ENCODE measurements at regions of chr13 and their contacts with region 1.

Region 1: DNA sequence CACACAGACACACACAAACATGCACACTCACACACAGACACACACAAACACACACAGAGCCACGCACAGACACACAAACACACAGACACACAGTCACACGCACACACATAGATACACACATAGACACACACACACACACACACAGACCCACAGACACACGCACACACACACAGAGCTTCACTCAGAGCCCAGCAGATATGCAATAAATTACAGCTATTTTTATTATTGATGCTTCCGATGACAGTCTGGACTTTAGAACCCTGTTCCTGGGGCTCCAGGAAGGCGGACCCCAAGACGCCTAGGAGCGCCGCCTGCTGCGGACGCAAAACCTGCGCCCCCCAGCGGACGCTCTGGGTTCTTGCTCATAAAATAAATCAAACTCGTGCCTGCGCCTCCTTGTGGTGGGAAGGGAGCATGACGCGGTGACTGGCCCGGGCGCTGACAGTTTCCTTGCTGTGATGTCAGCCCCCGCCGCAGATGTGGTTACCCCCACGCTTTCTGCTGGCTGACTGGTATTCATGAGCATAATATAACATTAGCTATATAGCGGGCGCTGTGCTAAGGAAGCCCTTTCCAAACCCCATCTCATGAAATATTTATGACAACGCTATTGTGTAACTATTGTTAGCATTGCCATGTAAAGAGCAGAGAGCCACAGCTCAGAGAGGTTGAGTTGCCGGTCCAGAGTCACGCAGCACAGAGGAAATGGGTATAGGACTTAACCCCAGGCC is 64.4 kb upstream of the TM9SF2 start:
- DNase-seq: peak; percentile 98
- H3K4me3 Mint-ChIP-seq: peak overlapping the region; percentile 21
- H3K27ac Mint-ChIP-seq: peak overlapping the region; percentile 23
- H3K4me1 Mint-ChIP-seq: peaks cover 55% of the 10 kb centered on the region
- H3K27me3 Mint-ChIP-seq: no peaks in the 10 kb centered on the region

Region 2: GRCh38 chr13:98632961-98633360 is 803.9 kb before region 1 on chr13:
- CTCF ChIA-PET with region 1: no interaction called
- intact Hi-C with region 1: no loop called
- DNase-seq: no peak
- H3K4me3 Mint-ChIP-seq: no peak overlapping the region
- H3K27ac Mint-ChIP-seq: no peak overlapping the region
- H3K4me1 Mint-ChIP-seq: peaks cover 2% of the 10 kb centered on the region
- H3K27me3 Mint-ChIP-seq: no peaks in the 10 kb centered on the region

Region 3: DNA sequence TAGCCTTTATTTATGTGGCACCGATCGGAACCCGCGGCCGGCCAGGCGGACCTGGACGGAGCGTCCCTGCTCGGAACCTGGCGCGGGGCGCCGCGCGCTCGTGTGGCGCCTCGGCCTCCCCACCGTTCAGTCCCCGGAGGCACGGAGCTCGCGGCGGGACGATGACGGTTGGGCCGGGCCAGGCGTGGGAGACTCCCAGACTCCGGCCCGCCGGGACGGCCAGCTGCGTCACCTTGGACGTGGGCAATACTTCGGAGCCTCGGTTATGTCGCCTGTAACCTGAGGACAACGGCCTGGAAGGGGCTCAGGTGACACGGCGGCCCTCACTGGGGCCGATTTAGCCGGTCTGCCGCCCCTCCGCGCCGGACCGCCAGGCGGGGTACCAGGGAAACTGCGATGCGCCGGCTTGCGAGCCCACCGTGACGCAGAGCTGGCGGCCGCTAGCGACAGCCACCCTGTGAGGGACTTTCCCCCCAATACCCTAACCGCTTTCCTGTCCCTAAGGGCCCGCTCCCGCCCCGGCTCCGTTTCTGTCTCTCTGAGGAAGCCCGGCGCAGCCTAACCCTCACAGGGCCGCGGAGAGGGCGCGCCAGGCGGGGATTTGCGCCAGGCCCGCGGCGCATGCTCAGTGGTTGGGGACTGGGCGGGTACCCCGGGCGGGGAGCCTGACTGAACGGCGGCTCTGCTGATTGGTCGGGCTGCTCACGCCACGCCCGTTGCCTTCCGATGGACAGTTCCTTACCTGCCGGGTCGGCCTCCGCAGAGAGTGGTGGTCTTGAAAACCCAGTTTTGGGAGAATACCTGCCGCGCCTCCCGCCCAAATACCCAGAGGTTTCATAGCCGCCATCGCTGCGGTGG is 349.5 kb before region 1 on chr13:
- CTCF ChIA-PET with region 1: no interaction called
- intact Hi-C with region 1: loop called (anchors 5 kb)
- DNase-seq: peak; percentile 94
- H3K4me3 Mint-ChIP-seq: peak overlapping the region; percentile 99
- H3K27ac Mint-ChIP-seq: peak overlapping the region; percentile 97
- H3K4me1 Mint-ChIP-seq: peaks cover 30% of the 10 kb centered on the region
- H3K27me3 Mint-ChIP-seq: no peaks in the 10 kb centered on the region

Region 4: GRCh38 chr13:99258210-99258860 is 178.5 kb before region 1 on chr13 and contains the start of gene GPR18:
- CTCF ChIA-PET with region 1: interaction called, 8 read pairs
- intact Hi-C with region 1: loop called (anchors 1 kb)
- DNase-seq: peak; percentile 61
- H3K4me3 Mint-ChIP-seq: peak within 1 kb of the TSS; percentile 81
- H3K27ac Mint-ChIP-seq: peak within 1 kb of the TSS; percentile 91
- H3K4me1 Mint-ChIP-seq: peaks cover 72% of the 10 kb centered on the region
- H3K27me3 Mint-ChIP-seq: no peaks in the 10 kb centered on the region
- total RNA-seq, gene GPR18: 2.4 TPM

Region 5: DNA sequence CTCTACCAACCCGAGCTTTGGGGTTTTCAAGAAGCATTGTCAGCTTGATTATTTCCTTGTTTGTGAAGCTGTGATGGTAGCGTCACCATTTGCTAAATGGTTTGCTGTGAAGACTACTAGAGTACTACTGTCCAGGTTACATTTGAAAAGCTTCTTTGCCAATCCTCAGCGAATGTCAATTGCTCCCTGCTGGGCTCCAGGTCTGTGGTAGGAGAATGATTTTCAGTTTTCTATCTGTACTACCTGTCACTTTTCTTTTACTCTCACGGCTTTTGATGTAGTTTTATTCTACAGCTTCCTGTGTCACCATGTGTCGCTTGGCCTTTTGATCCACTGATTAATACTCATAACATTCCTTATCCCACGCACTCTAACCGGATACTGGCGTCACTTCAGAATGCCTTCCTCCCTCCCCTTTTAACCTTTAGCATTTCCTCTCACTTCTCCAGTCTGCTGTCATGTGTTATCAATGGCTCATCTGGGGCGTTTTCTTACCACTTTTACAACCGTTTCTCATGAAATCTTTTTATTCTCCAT is 122.1 kb before region 1 on chr13:
- CTCF ChIA-PET with region 1: interaction called, 6 read pairs
- intact Hi-C with region 1: loop called (anchors 1 kb)
- DNase-seq: peak; percentile 92
- H3K4me3 Mint-ChIP-seq: peak overlapping the region; percentile 54
- H3K27ac Mint-ChIP-seq: peak overlapping the region; percentile 96
- H3K4me1 Mint-ChIP-seq: peaks cover 82% of the 10 kb centered on the region
- H3K27me3 Mint-ChIP-seq: no peaks in the 10 kb centered on the region

Region 6: DNA sequence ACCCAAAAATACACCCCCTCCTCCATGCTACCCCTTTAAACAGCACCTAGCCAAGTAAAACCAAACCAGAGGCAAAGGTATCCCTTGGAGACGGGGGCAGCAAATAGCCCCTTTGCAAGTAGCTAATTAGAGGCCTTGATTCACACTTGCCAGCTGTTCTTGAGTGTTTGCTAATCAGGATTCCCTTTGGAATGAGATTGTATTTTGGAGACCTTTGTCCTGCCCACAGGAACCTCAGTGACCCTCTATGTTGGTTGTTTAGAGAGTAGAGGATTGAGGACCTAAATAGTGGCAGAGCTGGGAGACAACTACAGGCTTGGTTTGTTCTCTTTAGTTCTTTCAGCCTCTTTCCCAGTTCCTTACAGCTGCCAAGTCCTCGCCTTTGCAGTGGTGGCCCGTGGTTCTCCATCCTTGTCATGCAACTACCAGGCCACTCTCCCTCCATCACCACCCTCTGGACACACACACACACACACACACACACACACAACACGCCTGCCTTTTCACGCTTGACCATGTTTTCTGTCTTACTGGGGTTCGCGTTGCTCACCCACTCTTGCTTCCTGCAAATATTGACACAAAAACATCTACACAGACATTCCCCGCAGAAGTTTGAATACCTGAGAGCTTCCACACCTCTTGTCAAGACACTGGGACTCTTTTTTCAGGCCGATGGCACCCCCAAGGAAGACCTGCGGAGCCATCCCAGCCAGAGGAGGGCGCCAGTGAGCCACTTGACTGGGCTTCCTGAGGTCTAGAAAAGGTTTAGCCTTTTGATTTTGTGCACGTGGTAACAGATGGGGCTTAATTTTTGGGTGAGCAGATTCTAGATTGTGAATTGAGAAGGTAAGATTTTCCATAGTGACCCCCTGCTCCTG is 49.7 kb before region 1 on chr13:
- CTCF ChIA-PET with region 1: interaction called, 288 read pairs
- intact Hi-C with region 1: loop called (anchors 1 kb)
- DNase-seq: peak; percentile 96
- H3K4me3 Mint-ChIP-seq: no peak overlapping the region
- H3K27ac Mint-ChIP-seq: peak overlapping the region; percentile 85
- H3K4me1 Mint-ChIP-seq: peaks cover 72% of the 10 kb centered on the region
- H3K27me3 Mint-ChIP-seq: no peaks in the 10 kb centered on the region

Region 7: GRCh38 chr13:99548448-99548847 is 111.6 kb after region 1 on chr13:
- CTCF ChIA-PET with region 1: no interaction called
- intact Hi-C with region 1: no loop called
- DNase-seq: no peak
- H3K4me3 Mint-ChIP-seq: no peak overlapping the region
- H3K27ac Mint-ChIP-seq: no peak overlapping the region
- H3K4me1 Mint-ChIP-seq: peaks cover 25% of the 10 kb centered on the region
- H3K27me3 Mint-ChIP-seq: no peaks in the 10 kb centered on the region

Region 8: GRCh38 chr13:99606324-99607066 is 169.6 kb after region 1 on chr13:
- CTCF ChIA-PET with region 1: interaction called, 4 read pairs
- intact Hi-C with region 1: loop called (anchors 2 kb)
- DNase-seq: peak; percentile 92
- H3K4me3 Mint-ChIP-seq: peak within 1 kb of the TSS; percentile 82
- H3K27ac Mint-ChIP-seq: peak within 1 kb of the TSS; percentile 75
- H3K4me1 Mint-ChIP-seq: peaks cover 23% of the 10 kb centered on the region
- H3K27me3 Mint-ChIP-seq: no peaks in the 10 kb centered on the region

Region 9: DNA sequence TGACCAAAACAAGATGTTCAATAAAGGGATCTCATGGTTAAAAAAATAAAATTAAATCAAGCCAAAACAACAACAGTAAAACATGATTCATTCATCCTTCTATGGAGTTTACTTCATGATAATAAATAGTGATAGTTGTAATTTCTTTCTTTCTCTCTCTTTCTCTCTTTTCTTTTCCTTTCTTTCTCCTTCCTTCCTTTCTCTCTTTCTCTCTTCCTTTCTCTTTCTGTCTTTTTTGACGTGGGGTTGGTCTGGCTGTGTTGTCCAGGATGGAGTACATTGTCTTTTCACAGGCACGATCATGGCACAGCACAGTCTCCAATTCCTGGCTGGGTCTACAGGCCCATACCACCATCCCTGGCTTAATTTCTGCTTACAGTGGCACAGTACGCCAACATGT is 623.0 kb after region 1 on chr13:
- CTCF ChIA-PET with region 1: no interaction called
- intact Hi-C with region 1: no loop called
- DNase-seq: no peak
- H3K4me3 Mint-ChIP-seq: no peak overlapping the region
- H3K27ac Mint-ChIP-seq: no peak overlapping the region
- H3K4me1 Mint-ChIP-seq: no peaks in the 10 kb centered on the region
- H3K27me3 Mint-ChIP-seq: peaks cover 4% of the 10 kb centered on the region

Measured in activated naive CD4-positive, alpha-beta T cell treated with anti-CD3 and anti-CD28 coated beads for 36 hours (primary cell).